Gastrocnemius medialis (tissue), 4 donors: ENCODE measurements at regions of chr7 and their contacts with region 1.

Region 1: GRCh38 chr7:149239345-149240191 is at the start of gene ZNF212:
- DNase-seq: peak; percentile 85 to 90
- ATAC-seq: peak; percentile 91 to 99
- H3K4me3 ChIP-seq: peak within 1 kb of the TSS; percentile 65 to 98 (median 90)
- H3K27ac ChIP-seq: peak within 1 kb of the TSS; percentile 82 to 91 (median 86)
- H3K4me1 ChIP-seq: peaks cover 21% of the 10 kb centered on the region in 2 donors
- H3K27me3 ChIP-seq: no peaks in the 10 kb centered on the region
- CTCF ChIP-seq: peak; percentile 84 to 90 (median 86)
- POLR2A ChIP-seq: peak in 1 of 2 donors; percentile 34
- total RNA-seq, gene ZNF212: 3.7 to 7.5 (median 4.7) TPM

Region 2: GRCh38 chr7:149147072-149147751 is 92.4 kb before region 1 on chr7 and contains the start of gene ZNF398:
- in situ Hi-C with region 1: no loop called
- intact Hi-C with region 1: loop called (anchors 2 kb)
- DNase-seq: peak; percentile 54 to 58
- ATAC-seq: peak; percentile 87 to 92
- H3K4me3 ChIP-seq: peak within 1 kb of the TSS; percentile 76 to 98 (median 94)
- H3K27ac ChIP-seq: peak within 1 kb of the TSS; percentile 85 to 96 (median 92)
- H3K4me1 ChIP-seq: peaks cover 6 to 13% of the 10 kb centered on the region in 2 donors
- H3K27me3 ChIP-seq: no peaks in the 10 kb centered on the region
- CTCF ChIP-seq: peak; percentile 65 to 98 (median 82)
- POLR2A ChIP-seq: peak; percentile 50 to 68
- total RNA-seq, gene ZNF398: 12.8 to 19.9 (median 15.0) TPM

Region 3: DNA sequence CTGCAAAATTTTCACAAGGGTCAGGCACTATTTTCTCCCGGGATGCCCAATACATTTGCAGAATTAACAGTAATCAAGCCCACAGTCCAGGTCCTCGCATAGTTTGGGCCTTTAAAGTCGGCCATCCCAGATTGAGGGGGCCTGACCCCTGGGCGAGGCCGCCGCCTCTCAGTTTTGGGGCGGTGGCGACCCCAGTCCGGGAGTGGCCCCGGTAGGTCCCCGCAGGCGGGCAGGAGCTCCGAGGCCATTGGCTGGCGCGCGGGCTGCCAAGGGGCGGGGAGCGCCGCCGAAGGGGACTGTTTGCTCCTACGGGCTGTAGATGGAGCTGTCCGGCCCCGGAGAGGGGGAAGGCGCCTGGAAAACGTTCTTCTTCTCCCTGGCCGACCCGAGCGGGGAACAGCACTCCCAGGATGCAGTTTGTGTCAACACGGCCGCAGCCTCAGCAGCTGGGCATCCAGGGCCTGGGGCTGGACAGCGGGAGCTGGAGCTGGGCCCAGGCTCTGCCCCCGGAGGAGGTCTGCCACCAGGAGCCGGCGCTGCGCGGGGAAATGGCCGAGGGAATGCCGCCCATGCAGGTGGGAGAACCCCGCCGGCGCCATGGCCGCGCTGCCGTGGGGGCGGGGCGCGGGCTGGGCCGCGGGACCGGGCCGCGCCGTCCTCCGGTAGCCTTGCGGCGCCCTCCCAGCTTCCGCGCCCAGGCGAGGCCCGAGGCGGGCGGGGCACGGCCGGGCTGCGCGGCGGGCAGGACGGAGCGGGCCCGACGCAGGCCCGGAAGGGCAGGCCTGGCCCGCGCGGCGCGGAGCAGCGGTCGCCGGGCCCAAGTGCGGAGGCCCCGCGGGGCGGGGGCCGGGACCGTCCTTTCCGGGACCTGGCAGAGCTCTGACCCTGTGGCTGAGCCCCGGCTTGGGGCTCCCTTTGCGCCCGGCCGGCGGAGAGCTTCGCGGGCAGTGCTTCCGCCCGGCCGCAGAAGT is 44.1 kb before region 1 on chr7 and contains the start of gene ZNF282:
- in situ Hi-C with region 1: no loop called
- intact Hi-C with region 1: loop called (anchors 5 kb)
- DNase-seq: peak; percentile 74 to 87
- ATAC-seq: peak; percentile 95 to 96
- H3K4me3 ChIP-seq: peak within 1 kb of the TSS; percentile 76 to 87 (median 80)
- H3K27ac ChIP-seq: peak within 1 kb of the TSS; percentile 80 to 96 (median 86)
- H3K4me1 ChIP-seq: peaks cover 9 to 17% of the 10 kb centered on the region in 2 donors
- H3K27me3 ChIP-seq: peaks cover 0 to 2% (median 0%) of the 10 kb centered on the region in 3 donors
- CTCF ChIP-seq: peak in 4 of 5 experiments; percentile 33 to 71 (median 54)
- POLR2A ChIP-seq: peak; percentile 41 to 43
- total RNA-seq, gene ZNF282: 16.8 to 24.1 (median 23.0) TPM

Region 4: GRCh38 chr7:149261829-149262617 is 22.5 kb after region 1 on chr7 and contains the start of gene ZNF783:
- in situ Hi-C with region 1: no loop called
- intact Hi-C with region 1: loop called (anchors 1 kb)
- DNase-seq: peak; percentile 71 to 84
- ATAC-seq: peak; percentile 92 to 94
- H3K4me3 ChIP-seq: peak within 1 kb of the TSS; percentile 59 to 83 (median 62)
- H3K27ac ChIP-seq: peak within 1 kb of the TSS; percentile 76 to 92 (median 85)
- H3K4me1 ChIP-seq: peaks cover 12 to 18% of the 10 kb centered on the region in 2 donors
- H3K27me3 ChIP-seq: no peaks in the 10 kb centered on the region
- CTCF ChIP-seq: peak; percentile 73 to 96 (median 94)
- POLR2A ChIP-seq: peak; percentile 64 to 66
- total RNA-seq, gene ZNF783: 3.4 to 7.1 (median 5.5) TPM

Region 5: DNA sequence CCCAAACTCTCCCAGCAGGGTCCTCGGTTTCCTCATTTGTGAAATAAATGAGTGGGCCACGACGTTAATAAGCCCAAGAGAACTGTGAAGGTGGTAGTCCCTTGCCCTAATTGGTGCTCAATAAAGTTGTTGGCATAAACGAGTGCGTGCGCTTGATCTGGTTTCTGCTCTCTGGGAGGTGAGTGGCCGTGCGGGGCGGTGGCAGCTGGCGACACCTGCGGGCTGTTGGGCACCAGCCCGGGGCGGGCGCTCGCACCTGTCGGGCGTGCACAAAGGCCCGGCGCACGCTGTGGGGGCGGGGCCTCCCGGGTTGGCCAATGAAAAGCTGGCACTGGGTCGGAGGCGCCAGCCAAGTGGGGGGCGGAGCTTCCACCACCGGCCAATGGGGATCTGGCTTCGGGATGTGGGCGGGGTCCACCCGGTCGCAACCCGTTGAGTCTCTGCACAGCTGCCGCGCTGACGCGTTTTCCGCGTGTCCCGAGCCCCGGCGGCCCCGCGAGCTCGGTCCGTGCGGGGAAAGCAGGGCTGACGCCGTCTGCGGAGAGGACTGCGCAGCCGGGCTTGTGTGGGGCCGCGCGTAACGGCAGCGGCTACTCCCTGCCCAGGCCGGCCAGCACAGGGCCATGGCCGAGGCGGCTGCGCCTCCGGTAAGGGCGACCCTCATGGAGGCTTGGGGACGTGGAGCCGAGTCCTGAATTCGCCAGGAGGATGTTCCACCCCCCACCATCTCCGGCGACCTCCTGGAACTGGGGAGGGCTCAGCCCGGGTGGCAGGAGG is 45.5 kb after region 1 on chr7:
- in situ Hi-C with region 1: no loop called
- intact Hi-C with region 1: loop called (anchors 1 kb)
- DNase-seq: peak; percentile 95 to 97
- ATAC-seq: peak; percentile 97
- H3K4me3 ChIP-seq: peak overlapping the region; percentile 68 to 86 (median 78)
- H3K27ac ChIP-seq: peak overlapping the region; percentile 77 to 89 (median 84)
- H3K4me1 ChIP-seq: peaks cover 6 to 11% of the 10 kb centered on the region in 2 donors
- H3K27me3 ChIP-seq: no peaks in the 10 kb centered on the region
- CTCF ChIP-seq: no peak
- POLR2A ChIP-seq: peak; percentile 60 to 65